Activated CD8-positive, alpha-beta T cell treated with anti-CD3 and anti-CD28 coated beads, Interleukin-2, amount 10 ng/mL, durations not matched to agents 7 days and 5 days (primary cell): ENCODE measurements at regions of chr18 and their contacts with region 1.

Region 1: GRCh38 chr18:56575819-56576663 is 62.4 kb downstream of the TXNL1 start:
- DNase-seq: no peak
- ATAC-seq: no peak
- H3K4me3 Mint-ChIP-seq: no peak overlapping the region
- H3K27ac Mint-ChIP-seq: no peak overlapping the region
- H3K4me1 Mint-ChIP-seq: no peaks in the 10 kb centered on the region
- H3K27me3 Mint-ChIP-seq: peaks cover 8% of the 10 kb centered on the region

Region 2: DNA sequence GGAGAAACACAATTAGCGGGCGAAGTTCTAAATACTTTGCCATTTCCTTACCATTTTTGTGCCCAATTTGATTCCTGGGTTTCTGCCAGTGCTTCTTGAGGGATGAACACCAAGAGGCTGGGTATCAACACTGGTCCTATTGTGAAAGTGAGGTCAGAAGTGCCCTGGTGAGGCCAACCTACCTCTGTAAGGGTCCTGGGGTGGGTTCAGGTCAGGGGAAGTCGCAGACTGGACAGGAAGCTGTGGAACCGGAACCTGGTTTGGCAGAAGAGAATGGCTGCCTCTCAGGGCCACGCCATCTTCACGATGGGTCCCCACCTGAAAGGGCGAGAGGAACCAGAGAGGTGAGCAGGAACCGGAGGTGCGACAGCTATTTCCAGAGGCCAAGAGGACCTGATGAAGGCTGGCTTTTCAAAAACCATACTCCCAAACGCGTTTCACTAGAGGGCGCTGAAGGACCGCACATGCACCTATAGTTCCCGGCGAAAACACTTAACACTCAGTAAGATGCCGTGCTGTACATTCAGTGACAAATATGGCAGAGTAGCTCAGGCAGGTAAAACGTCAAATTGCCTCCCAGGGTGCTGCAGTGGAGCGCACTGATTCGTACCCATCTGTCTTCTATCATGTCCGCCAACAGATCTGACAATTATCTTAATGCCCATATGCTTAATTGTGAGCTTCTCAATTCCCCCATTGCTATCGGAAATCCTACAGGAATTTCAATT is 1341.5 kb before region 1 on chr18:
- CTCF ChIA-PET with region 1: interaction called, 10 read pairs
- POLR2A ChIA-PET with region 1: no interaction called
- DNase-seq: peak; percentile 75
- ATAC-seq: peak; percentile 79
- H3K4me3 Mint-ChIP-seq: no peak overlapping the region
- H3K27ac Mint-ChIP-seq: no peak overlapping the region
- H3K4me1 Mint-ChIP-seq: no peaks in the 10 kb centered on the region
- H3K27me3 Mint-ChIP-seq: no peaks in the 10 kb centered on the region

Region 3: DNA sequence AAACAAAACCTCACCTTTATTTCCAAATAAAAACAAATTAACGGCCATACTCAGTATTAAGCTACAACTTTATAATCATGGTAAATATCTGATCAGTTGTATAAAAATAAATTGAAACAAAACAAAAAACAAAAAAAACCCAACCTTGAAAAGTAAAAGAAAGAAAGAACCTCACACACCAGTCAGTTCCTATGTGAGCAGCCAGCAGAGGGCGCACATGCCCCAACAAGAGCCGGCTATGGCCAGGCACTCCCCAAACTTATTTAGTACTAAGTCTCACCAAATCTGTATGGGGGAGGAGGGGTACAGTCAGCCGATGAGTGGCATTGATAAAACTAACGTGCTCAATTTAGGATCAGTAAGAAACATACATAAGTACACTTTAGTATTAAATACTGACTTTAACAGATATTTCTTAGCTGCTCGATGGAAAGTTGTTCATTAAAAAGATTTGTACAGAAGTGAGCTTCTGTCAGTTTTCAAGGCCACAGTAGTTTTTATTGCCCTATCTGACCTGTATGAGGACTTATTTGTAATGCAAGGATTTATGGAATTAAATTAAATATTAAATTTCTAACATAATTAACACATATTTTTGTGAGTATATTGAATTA is 1160.7 kb before region 1 on chr18:
- CTCF ChIA-PET with region 1: interaction called, 14 read pairs
- POLR2A ChIA-PET with region 1: no interaction called
- DNase-seq: peak; percentile 82
- ATAC-seq: peak; percentile 84
- H3K4me3 Mint-ChIP-seq: no peak overlapping the region
- H3K27ac Mint-ChIP-seq: no peak overlapping the region
- H3K4me1 Mint-ChIP-seq: no peaks in the 10 kb centered on the region
- H3K27me3 Mint-ChIP-seq: no peaks in the 10 kb centered on the region

Region 4: GRCh38 chr18:56337507-56337906 is 238.5 kb before region 1 on chr18:
- CTCF ChIA-PET with region 1: no interaction called
- POLR2A ChIA-PET with region 1: no interaction called
- DNase-seq: no peak
- ATAC-seq: no peak
- H3K4me3 Mint-ChIP-seq: no peak overlapping the region
- H3K27ac Mint-ChIP-seq: no peak overlapping the region
- H3K4me1 Mint-ChIP-seq: no peaks in the 10 kb centered on the region
- H3K27me3 Mint-ChIP-seq: no peaks in the 10 kb centered on the region

Region 5: DNA sequence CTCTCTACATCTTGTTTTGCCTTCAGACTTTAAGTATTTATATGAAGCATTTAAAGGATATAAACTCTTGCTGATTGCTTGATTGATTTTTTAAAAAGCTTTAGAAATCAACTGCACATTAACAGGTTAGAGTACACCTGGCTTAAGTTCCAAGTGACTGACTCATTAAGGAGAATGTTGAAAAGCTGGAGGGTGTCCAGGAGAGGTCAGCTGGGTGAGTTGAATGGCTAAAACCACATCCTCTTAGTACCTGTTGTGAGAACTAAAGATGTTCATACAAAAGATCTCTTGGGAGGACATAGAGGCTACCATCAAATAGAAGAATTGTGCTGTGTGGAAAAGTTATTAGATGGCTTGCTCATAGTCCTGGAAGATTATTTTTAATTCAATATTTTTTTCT is 144.5 kb before region 1 on chr18:
- CTCF ChIA-PET with region 1: no interaction called
- POLR2A ChIA-PET with region 1: no interaction called
- DNase-seq: no peak
- ATAC-seq: no peak
- H3K4me3 Mint-ChIP-seq: no peak overlapping the region
- H3K27ac Mint-ChIP-seq: no peak overlapping the region
- H3K4me1 Mint-ChIP-seq: no peaks in the 10 kb centered on the region
- H3K27me3 Mint-ChIP-seq: no peaks in the 10 kb centered on the region